ENCODE measurements at regions of chr11 and their contacts with region 1.

Region 1: DNA sequence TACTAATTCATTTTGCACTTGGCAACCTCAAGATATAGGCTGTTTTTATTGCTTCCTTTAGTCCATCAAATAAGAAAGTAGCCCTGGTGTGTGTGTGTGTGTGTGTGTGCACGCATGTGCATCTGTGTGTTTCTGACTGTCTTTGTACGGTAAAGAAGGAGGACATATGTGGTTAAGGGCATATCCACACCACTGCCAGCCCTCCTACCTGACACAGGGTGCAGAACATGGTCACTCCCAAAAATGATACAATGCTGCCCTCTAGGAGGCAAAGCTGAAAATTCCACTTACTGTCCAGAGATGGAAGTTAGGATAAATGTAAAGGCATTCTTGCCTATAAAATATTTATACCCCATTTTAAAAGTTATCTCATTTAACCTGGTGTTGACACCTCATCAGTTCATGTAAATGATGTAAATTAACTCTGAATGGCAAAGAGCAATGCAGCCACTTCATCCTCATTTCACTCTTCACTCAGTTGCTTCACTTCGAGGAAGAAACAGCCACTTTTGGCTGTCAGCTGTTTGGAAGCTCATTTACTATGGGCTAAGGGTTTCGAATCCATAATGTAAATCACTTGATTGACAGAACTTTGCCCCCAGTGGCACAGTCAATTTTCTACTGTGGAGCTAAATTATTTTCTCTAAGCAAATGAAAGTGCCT is 83.1 kb upstream of the MTNR1B start:
- DNase-seq: peak; percentile 76
- H3K4me3 Mint-ChIP-seq: no peak overlapping the region
- H3K27ac Mint-ChIP-seq: no peak overlapping the region
- H3K4me1 Mint-ChIP-seq: no peaks in the 10 kb centered on the region
- H3K27me3 Mint-ChIP-seq: no peaks in the 10 kb centered on the region
- CTCF ChIP-seq: peak; percentile 80

Region 2: DNA sequence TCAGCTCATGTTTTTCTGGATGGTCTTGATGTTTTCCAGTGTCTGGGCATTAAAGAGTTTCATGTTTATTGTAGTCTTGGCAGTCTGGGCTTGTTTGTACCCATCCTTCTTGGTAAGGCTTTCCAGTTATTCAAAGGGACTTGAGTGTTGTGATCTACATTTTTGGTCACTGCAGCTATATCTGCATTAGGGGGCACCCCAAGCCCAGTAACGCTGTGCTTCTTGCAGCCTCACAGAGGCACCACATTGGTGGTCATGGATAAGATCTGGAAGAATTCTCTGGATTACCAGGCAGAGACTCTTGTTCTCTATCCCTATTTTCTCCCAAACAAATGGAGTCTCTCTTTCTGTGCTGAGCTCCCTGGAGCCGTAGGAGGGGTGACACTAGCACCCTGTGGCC is 1113.3 kb before region 1 on chr11:
- CTCF ChIA-PET with region 1: interaction called, 3 read pairs
- POLR2A ChIA-PET with region 1: no interaction called
- intact Hi-C with region 1: loop called (anchors 2 kb)
- DNase-seq: peak; percentile 21
- H3K4me3 Mint-ChIP-seq: no peak overlapping the region
- H3K27ac Mint-ChIP-seq: no peak overlapping the region
- H3K4me1 Mint-ChIP-seq: no peaks in the 10 kb centered on the region
- H3K27me3 Mint-ChIP-seq: no peaks in the 10 kb centered on the region
- CTCF ChIP-seq: no peak

Region 3: GRCh38 chr11:92211576-92212167 is 674.7 kb before region 1 on chr11:
- CTCF ChIA-PET with region 1: interaction called, 9 read pairs
- POLR2A ChIA-PET with region 1: no interaction called
- intact Hi-C with region 1: loop called (anchors 1 kb)
- DNase-seq: peak; percentile 33
- H3K4me3 Mint-ChIP-seq: no peak overlapping the region
- H3K27ac Mint-ChIP-seq: no peak overlapping the region
- H3K4me1 Mint-ChIP-seq: peaks cover under 1% of the 10 kb centered on the region
- H3K27me3 Mint-ChIP-seq: no peaks in the 10 kb centered on the region
- CTCF ChIP-seq: no peak

Region 4: DNA sequence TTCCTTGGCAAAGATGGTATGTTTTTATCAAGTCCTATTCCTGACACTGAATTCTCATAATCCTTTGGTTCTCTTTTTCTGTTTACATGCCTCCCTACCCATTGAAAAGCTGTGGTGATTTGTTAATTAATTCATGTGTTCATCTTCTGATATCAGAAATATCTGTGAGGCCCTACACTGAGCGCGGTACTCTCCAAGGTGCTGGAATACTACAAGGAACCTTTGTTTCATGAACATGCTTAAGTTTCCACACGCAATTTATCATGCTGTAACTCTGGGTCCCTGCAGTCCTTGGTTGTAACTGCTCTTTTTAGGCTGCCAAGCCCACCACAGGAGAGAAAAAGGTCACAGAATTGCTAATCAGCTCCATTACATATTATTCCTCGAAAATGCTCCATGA is 329.9 kb before region 1 on chr11:
- CTCF ChIA-PET with region 1: interaction called, 6 read pairs
- POLR2A ChIA-PET with region 1: no interaction called
- intact Hi-C with region 1: loop called (anchors 2 kb)
- DNase-seq: peak; percentile 58
- H3K4me3 Mint-ChIP-seq: no peak overlapping the region
- H3K27ac Mint-ChIP-seq: no peak overlapping the region
- H3K4me1 Mint-ChIP-seq: no peaks in the 10 kb centered on the region
- H3K27me3 Mint-ChIP-seq: no peaks in the 10 kb centered on the region
- CTCF ChIP-seq: no peak

Region 5: GRCh38 chr11:92845805-92846204 is 40.6 kb before region 1 on chr11:
- CTCF ChIA-PET with region 1: interaction called, 13 read pairs
- POLR2A ChIA-PET with region 1: no interaction called
- intact Hi-C with region 1: no loop called
- DNase-seq: peak; percentile 45
- H3K4me3 Mint-ChIP-seq: no peak overlapping the region
- H3K27ac Mint-ChIP-seq: no peak overlapping the region
- H3K4me1 Mint-ChIP-seq: peaks cover 4% of the 10 kb centered on the region
- H3K27me3 Mint-ChIP-seq: no peaks in the 10 kb centered on the region
- CTCF ChIP-seq: no peak

Region 6: DNA sequence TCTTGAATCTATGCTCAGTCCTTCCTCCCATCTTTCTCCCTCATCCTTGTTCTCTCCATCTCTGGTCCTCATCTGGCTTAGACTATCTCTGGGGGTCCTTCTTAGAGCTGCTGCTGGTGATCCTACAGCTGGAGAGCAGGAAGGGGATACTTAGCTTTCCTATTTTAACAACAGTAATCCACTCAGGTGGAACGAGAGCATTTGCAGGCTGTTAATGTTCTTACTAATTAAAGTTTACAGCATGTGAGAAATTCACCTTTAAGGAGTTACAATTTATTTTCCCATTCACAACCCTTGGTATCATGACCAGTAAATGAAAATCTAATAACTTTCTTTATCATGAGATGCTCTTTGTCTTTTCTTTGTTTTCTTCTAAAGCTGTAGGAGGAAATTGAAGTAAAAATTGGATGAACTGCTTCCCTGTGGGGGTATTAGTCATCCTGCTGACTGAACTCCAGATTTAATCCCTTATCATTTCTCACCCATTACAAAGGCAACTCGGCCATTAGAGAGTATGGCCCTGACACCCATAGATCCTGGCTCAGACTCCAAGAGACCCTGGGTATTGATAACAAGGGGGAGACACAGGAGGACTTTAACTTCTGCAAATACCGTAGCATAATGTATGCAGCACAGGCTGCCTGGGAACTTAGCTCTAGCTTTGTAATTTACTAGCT is 45.5 kb after region 1 on chr11:
- CTCF ChIA-PET with region 1: no interaction called
- POLR2A ChIA-PET with region 1: no interaction called
- intact Hi-C with region 1: no loop called
- DNase-seq: no peak
- H3K4me3 Mint-ChIP-seq: no peak overlapping the region
- H3K27ac Mint-ChIP-seq: no peak overlapping the region
- H3K4me1 Mint-ChIP-seq: peaks cover 15% of the 10 kb centered on the region
- H3K27me3 Mint-ChIP-seq: no peaks in the 10 kb centered on the region
- CTCF ChIP-seq: no peak

Measured in MCF 10A (cell line).